ENCODE measurements at regions of chr16 and their contacts with region 1.

Region 1: DNA sequence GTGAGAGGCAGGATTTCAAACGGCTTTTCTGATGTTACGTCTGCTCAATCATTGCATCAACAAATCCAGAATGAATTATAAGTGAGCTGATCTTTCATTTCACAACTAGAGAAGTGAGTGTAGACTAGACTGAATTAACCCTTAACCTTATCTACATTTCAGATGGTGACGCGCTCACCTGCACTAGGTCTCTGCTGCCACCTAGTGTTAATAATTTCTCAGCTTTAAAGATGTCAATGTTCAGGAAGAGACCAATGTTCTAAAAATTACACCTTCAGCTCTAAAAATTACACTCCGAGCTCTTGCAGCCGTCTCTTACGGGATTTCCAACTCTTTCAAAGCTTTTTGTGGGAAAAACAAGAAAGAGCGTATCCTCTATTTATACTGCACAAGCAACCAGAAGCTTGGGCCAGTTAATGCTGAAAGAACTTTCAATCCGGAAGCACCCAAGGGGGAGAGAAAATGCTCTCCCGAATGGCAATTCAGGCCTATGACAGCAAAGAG is 88.2 kb upstream of the FA2H start:
- DNase-seq: peak; percentile 49 to 78
- H3K4me3 ChIP-seq: no peak overlapping the region
- H3K4me3 Mint-ChIP-seq: no peak overlapping the region
- H3K27ac Mint-ChIP-seq: no peak overlapping the region
- H3K4me1 ChIP-seq: no peaks in the 10 kb centered on the region
- H3K4me1 Mint-ChIP-seq: peaks cover 5% of the 10 kb centered on the region
- H3K27me3 ChIP-seq: no peaks in the 10 kb centered on the region
- H3K27me3 Mint-ChIP-seq: no peaks in the 10 kb centered on the region
- CTCF ChIP-seq: peak; percentile 88 to 97

Region 2: GRCh38 chr16:74709441-74709877 is 153.3 kb before region 1 on chr16:
- CTCF ChIA-PET with region 1: interaction called, 29 read pairs
- POLR2A ChIA-PET with region 1: no interaction called
- intact Hi-C with region 1: loop called (anchors 1 kb)
- DNase-seq: peak; percentile 83 to 92
- H3K4me3 ChIP-seq: no peak overlapping the region
- H3K4me3 Mint-ChIP-seq: no peak overlapping the region
- H3K27ac Mint-ChIP-seq: no peak overlapping the region
- H3K4me1 ChIP-seq: no peaks in the 10 kb centered on the region
- H3K4me1 Mint-ChIP-seq: peaks cover 6% of the 10 kb centered on the region
- H3K27me3 ChIP-seq: no peaks in the 10 kb centered on the region
- H3K27me3 Mint-ChIP-seq: peaks cover 2% of the 10 kb centered on the region
- CTCF ChIP-seq: peak; percentile 95 to 99

Region 3: GRCh38 chr16:74774203-74775116 is 88.3 kb before region 1 on chr16 and contains the start of gene FA2H:
- CTCF ChIA-PET with region 1: interaction called, 38 read pairs
- POLR2A ChIA-PET with region 1: interaction called, 4 read pairs
- intact Hi-C with region 1: loop called (anchors 1 kb)
- DNase-seq: peak; percentile 97 to 100
- H3K4me3 ChIP-seq: peak within 1 kb of the TSS; percentile 82
- H3K4me3 Mint-ChIP-seq: peak within 1 kb of the TSS; percentile 98
- H3K27ac Mint-ChIP-seq: peak within 1 kb of the TSS; percentile 84
- H3K4me1 ChIP-seq: peaks cover 7% of the 10 kb centered on the region; the same call in 1 of the 2 replicates
- H3K4me1 Mint-ChIP-seq: peaks cover 18% of the 10 kb centered on the region
- H3K27me3 ChIP-seq: no peaks in the 10 kb centered on the region
- H3K27me3 Mint-ChIP-seq: no peaks in the 10 kb centered on the region
- CTCF ChIP-seq: peak; percentile 38 to 65
- total RNA-seq, gene FA2H: 20.1 and 21.3 TPM in 2 replicates

Region 4: GRCh38 chr16:74785031-74785430 is 77.8 kb before region 1 on chr16:
- CTCF ChIA-PET with region 1: interaction called, 7 read pairs
- POLR2A ChIA-PET with region 1: no interaction called
- intact Hi-C with region 1: loop called (anchors 2 kb)
- DNase-seq: peak in 1 of 2 experiments; percentile 22
- H3K4me3 ChIP-seq: no peak overlapping the region
- H3K4me3 Mint-ChIP-seq: no peak overlapping the region
- H3K27ac Mint-ChIP-seq: no peak overlapping the region
- H3K4me1 ChIP-seq: no peaks in the 10 kb centered on the region
- H3K4me1 Mint-ChIP-seq: no peaks in the 10 kb centered on the region
- H3K27me3 ChIP-seq: no peaks in the 10 kb centered on the region
- H3K27me3 Mint-ChIP-seq: no peaks in the 10 kb centered on the region
- CTCF ChIP-seq: peak in 1 of 2 experiments; percentile 23

Region 5: GRCh38 chr16:74797414-74797813 is 65.4 kb before region 1 on chr16:
- CTCF ChIA-PET with region 1: no interaction called
- POLR2A ChIA-PET with region 1: no interaction called
- intact Hi-C with region 1: no loop called
- DNase-seq: no peak
- H3K4me3 ChIP-seq: no peak overlapping the region
- H3K4me3 Mint-ChIP-seq: no peak overlapping the region
- H3K27ac Mint-ChIP-seq: no peak overlapping the region
- H3K4me1 ChIP-seq: peaks cover 18% of the 10 kb centered on the region
- H3K4me1 Mint-ChIP-seq: peaks cover 6% of the 10 kb centered on the region
- H3K27me3 ChIP-seq: no peaks in the 10 kb centered on the region
- H3K27me3 Mint-ChIP-seq: no peaks in the 10 kb centered on the region
- CTCF ChIP-seq: no peak

Region 6: DNA sequence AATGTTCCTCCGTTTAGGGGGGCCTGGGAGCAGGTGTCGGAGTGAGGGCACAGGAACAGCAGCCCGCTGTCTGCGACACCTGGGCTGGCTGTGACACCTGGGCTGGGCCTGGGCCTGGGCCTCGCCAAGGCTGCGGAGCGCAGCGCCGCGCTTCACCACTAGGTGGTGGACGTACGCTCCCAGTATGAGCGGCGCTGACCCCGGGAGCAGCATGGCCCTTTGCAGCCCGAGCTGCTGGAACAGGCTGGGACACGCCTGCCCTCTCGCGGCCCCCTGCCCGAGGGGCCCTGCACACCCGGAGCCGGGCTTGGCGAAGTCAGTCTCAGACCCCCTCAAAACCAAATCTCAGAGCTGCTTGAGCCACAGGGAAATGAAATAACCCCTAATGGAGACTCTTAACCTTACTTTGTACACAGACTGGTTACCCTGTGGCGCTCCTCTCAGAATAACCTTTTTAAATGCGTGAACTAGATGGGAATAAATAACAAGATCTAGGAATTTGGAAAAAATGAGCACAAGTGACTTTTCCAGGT is 49.6 kb before region 1 on chr16:
- CTCF ChIA-PET with region 1: interaction called, 66 read pairs
- POLR2A ChIA-PET with region 1: no interaction called
- intact Hi-C with region 1: loop called (anchors 1 kb)
- DNase-seq: peak; percentile 94 to 97
- H3K4me3 ChIP-seq: no peak overlapping the region
- H3K4me3 Mint-ChIP-seq: peak overlapping the region; percentile 12
- H3K27ac Mint-ChIP-seq: no peak overlapping the region
- H3K4me1 ChIP-seq: peaks cover 51% of the 10 kb centered on the region
- H3K4me1 Mint-ChIP-seq: peaks cover 34% of the 10 kb centered on the region
- H3K27me3 ChIP-seq: no peaks in the 10 kb centered on the region
- H3K27me3 Mint-ChIP-seq: no peaks in the 10 kb centered on the region
- CTCF ChIP-seq: peak; percentile 99

Region 7: DNA sequence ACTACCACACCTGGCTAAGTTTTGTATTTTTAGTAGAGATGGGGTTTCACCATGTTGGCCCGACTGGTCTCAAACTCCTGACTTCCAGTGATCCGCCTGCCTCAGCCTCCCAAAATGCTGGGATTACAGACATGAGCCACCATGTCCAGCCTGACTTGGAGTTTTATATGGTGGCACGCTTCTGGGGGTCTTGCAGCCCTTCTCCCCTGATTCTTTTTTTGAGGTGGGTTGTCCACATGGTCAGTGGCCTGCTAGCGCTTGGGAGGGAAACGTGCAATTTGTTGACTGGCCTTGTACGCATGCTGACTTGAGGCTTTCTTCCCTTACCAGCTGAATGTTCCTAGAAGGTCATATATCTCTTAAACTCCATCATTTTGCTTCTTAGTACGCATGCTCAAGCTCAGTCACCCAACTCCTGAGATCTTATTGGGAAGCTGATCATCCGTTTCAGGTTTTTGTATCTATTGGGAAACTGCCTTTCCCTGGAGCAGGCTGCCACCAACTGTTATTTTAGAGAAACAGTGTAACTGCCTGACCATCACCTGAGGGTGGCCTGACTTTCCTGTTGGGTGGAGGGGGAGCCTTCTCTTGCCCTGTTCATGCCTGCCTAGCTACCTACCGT is 267.5 kb after region 1 on chr16:
- CTCF ChIA-PET with region 1: interaction called, 13 read pairs
- POLR2A ChIA-PET with region 1: no interaction called
- intact Hi-C with region 1: loop called (anchors 2 kb)
- DNase-seq: peak; percentile 56 to 61
- H3K4me3 ChIP-seq: no peak overlapping the region
- H3K4me3 Mint-ChIP-seq: peak overlapping the region; percentile 4
- H3K27ac Mint-ChIP-seq: peak overlapping the region; percentile 61
- H3K4me1 ChIP-seq: peaks cover 45% of the 10 kb centered on the region
- H3K4me1 Mint-ChIP-seq: peaks cover 26% of the 10 kb centered on the region
- H3K27me3 ChIP-seq: no peaks in the 10 kb centered on the region
- H3K27me3 Mint-ChIP-seq: no peaks in the 10 kb centered on the region
- CTCF ChIP-seq: peak in 1 of 2 experiments; percentile 20

Measured in Caco-2 (cell line).